Activated T-helper 1 cell treated with anti-CD3 and anti-CD28 coated beads, Interleukin-12 subunit alpha, Interleukin-12 subunit beta, Interleukin-2, Interleukin-4 antibody, amounts not matched to agents 30 ng/mL and 10 ng/mL and 1 ng/mL, durations not matched to agents 14 hours and 24 hours and 36 hours (primary cell): ENCODE measurements at regions of chr12 and their contacts with region 1.

Region 1: DNA sequence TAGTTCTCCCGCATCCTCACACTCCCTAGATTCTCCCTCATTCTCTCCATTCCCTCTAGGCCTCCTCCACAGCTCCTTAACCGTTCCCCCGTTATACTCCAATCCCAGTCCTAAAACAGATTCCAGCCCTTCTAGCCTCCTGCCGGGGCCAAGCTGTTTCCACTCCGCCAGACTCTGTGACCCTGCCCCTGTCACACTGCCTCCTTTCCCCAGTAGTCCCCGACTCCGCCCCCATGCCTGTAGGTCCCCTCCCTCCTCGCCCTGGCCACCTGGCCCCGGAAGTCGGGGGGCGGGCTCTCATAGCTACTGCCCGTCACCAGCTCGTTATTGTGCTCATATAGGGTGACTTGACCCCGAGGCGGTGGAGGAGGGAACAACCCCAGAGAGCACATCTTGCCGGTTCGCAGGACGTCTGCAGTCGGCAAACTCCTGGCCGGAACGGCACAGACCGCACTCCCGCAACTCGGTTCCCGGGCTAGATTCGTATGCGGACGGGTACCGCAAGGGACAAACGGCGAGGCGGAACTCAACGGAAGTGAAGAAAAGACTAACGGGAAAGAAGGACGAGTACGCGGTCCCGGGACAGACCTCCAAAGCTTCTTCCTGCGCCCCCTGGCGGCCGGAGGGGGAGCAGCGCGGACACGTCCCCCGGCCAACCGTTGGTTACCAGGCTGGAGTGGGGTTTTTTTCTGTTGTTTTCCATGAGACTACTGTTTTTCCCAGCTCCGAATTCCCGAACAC is at the start of gene AAAS:
- DNase-seq: peak; percentile 95
- H3K4me3 Mint-ChIP-seq: peak within 1 kb of the TSS; percentile 96
- H3K27ac Mint-ChIP-seq: peak within 1 kb of the TSS; percentile 97
- H3K4me1 Mint-ChIP-seq: peaks cover 41% of the 10 kb centered on the region
- H3K27me3 Mint-ChIP-seq: peaks cover 2% of the 10 kb centered on the region
- total RNA-seq, gene AAAS: 81.4 and 85.7 TPM in 2 replicates

Region 2: GRCh38 chr12:53180220-53180930 is 140.9 kb before region 1 on chr12 and contains the starts of genes CSAD and ZNF740:
- intact Hi-C with region 1: loop called (anchors 1 kb)
- DNase-seq: peak; percentile 97
- H3K4me3 Mint-ChIP-seq: peak within 1 kb of the TSS; percentile 88
- H3K27ac Mint-ChIP-seq: peak within 1 kb of the TSS; percentile 99
- H3K4me1 Mint-ChIP-seq: peaks cover 52% of the 10 kb centered on the region
- H3K27me3 Mint-ChIP-seq: no peaks in the 10 kb centered on the region
- total RNA-seq, gene CSAD: 21.7 and 22.6 TPM in 2 replicates
- total RNA-seq, gene ZNF740: 48.1 and 52.8 TPM in 2 replicates

Region 3: GRCh38 chr12:53251477-53252348 is 69.5 kb before region 1 on chr12:
- intact Hi-C with region 1: loop called (anchors 2 kb)
- DNase-seq: peak; percentile 69
- H3K4me3 Mint-ChIP-seq: peak overlapping the region; percentile 99
- H3K27ac Mint-ChIP-seq: peak overlapping the region; percentile 88
- H3K4me1 Mint-ChIP-seq: peaks cover 50% of the 10 kb centered on the region
- H3K27me3 Mint-ChIP-seq: peaks cover 2% of the 10 kb centered on the region

Region 4: GRCh38 chr12:53344824-53345485 is 23.7 kb after region 1 on chr12:
- intact Hi-C with region 1: loop called (anchors 1 kb)
- DNase-seq: peak; percentile 41
- H3K4me3 Mint-ChIP-seq: peak overlapping the region; percentile 99
- H3K27ac Mint-ChIP-seq: peak overlapping the region; percentile 96
- H3K4me1 Mint-ChIP-seq: peaks cover 23% of the 10 kb centered on the region
- H3K27me3 Mint-ChIP-seq: peaks cover 12% of the 10 kb centered on the region

Region 5: DNA sequence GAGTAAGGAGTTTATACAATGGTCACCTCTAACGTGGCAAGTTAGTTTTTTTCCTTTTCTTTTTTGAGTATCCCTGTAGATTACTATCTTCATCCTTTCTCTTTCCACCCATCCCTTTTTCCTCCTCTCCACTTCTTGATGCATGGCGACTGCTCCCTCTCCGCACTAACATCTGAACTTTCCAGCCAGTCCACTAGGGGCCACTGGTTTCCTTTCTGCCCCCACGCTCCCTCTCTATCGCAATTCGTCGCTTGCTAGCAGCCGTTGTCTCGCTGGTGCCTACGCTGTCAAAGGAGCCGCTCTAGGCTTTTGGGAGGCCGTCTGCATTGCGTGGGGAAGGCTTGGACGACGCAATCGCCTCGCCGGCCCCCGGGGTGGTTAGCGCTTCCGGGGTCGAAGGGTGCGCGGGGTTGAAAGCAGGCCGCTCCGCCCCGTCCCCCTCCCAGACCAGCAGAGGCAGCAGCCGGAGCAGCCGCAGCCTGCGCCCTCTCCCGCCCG is 130.5 kb after region 1 on chr12 and contains the start of gene PCBP2:
- intact Hi-C with region 1: loop called (anchors 1 kb)
- DNase-seq: peak; percentile 97
- H3K4me3 Mint-ChIP-seq: peak within 1 kb of the TSS; percentile 97
- H3K27ac Mint-ChIP-seq: peak within 1 kb of the TSS; percentile 99
- H3K4me1 Mint-ChIP-seq: peaks cover 29% of the 10 kb centered on the region
- H3K27me3 Mint-ChIP-seq: no peaks in the 10 kb centered on the region
- total RNA-seq, gene PCBP2: 865 and 896 TPM in 2 replicates

Region 6: GRCh38 chr12:53675651-53676453 is 354.6 kb after region 1 on chr12 and contains the start of gene ATP5MC2:
- intact Hi-C with region 1: loop called (anchors 1 kb)
- DNase-seq: peak; percentile 95
- H3K4me3 Mint-ChIP-seq: peak within 1 kb of the TSS; percentile 87
- H3K27ac Mint-ChIP-seq: peak within 1 kb of the TSS; percentile 95
- H3K4me1 Mint-ChIP-seq: peaks cover 22% of the 10 kb centered on the region
- H3K27me3 Mint-ChIP-seq: peaks cover 27% of the 10 kb centered on the region
- total RNA-seq, gene ATP5MC2: 363 and 383 TPM in 2 replicates